CD8-positive, alpha-beta T cell (primary cell): ENCODE measurements at regions of chr20 and their contacts with region 1.

Region 1: GRCh38 chr20:35490736-35491181 is 35.4 kb downstream of the CEP250 start:
- DNase-seq: peak; percentile 19 to 87 (median 75)
- ATAC-seq: peak; percentile 98
- H3K4me3 ChIP-seq: peak overlapping the region; percentile 86 to 94
- H3K4me3 Mint-ChIP-seq: peak overlapping the region; percentile 98
- H3K27ac ChIP-seq: peak overlapping the region; percentile 91 to 95
- H3K27ac Mint-ChIP-seq: peak overlapping the region; percentile 99
- H3K4me1 ChIP-seq: peaks cover 46% of the 10 kb centered on the region
- H3K4me1 Mint-ChIP-seq: peaks cover 61% of the 10 kb centered on the region
- H3K27me3 ChIP-seq: no peaks in the 10 kb centered on the region
- H3K27me3 Mint-ChIP-seq: no peaks in the 10 kb centered on the region
- CTCF ChIP-seq: no peak

Region 2: GRCh38 chr20:35454881-35455609 is 35.7 kb before region 1 on chr20 and contains the start of gene CEP250:
- CTCF ChIA-PET with region 1: interaction called, 4 read pairs
- POLR2A ChIA-PET with region 1: interaction called, 15 read pairs
- intact Hi-C with region 1: loop called (anchors 2 kb)
- DNase-seq: peak; percentile 86 to 96 (median 95)
- ATAC-seq: peak; percentile 98
- H3K4me3 ChIP-seq: peak within 1 kb of the TSS; percentile 62 to 94
- H3K4me3 Mint-ChIP-seq: peak within 1 kb of the TSS; percentile 94
- H3K27ac ChIP-seq: peak within 1 kb of the TSS; percentile 52 to 94
- H3K27ac Mint-ChIP-seq: peak within 1 kb of the TSS; percentile 97
- H3K4me1 ChIP-seq: peaks cover 10% of the 10 kb centered on the region
- H3K4me1 Mint-ChIP-seq: peaks cover 21% of the 10 kb centered on the region
- H3K27me3 ChIP-seq: no peaks in the 10 kb centered on the region
- H3K27me3 Mint-ChIP-seq: no peaks in the 10 kb centered on the region
- CTCF ChIP-seq: no peak
- total RNA-seq, gene CEP250: 33.4 to 34.4 TPM

Region 3: GRCh38 chr20:35541783-35542588 is 51.2 kb after region 1 on chr20 and contains the start of gene ERGIC3:
- CTCF ChIA-PET with region 1: no interaction called
- POLR2A ChIA-PET with region 1: interaction called, 5 read pairs
- intact Hi-C with region 1: loop called (anchors 2 kb)
- DNase-seq: peak; percentile 93 to 98 (median 97)
- ATAC-seq: peak; percentile 97
- H3K4me3 ChIP-seq: peak within 1 kb of the TSS; percentile 81 to 94
- H3K4me3 Mint-ChIP-seq: peak within 1 kb of the TSS; percentile 89
- H3K27ac ChIP-seq: peak within 1 kb of the TSS; percentile 71 to 86
- H3K27ac Mint-ChIP-seq: peak within 1 kb of the TSS; percentile 89
- H3K4me1 ChIP-seq: peaks cover 14% of the 10 kb centered on the region
- H3K4me1 Mint-ChIP-seq: peaks cover 27% of the 10 kb centered on the region
- H3K27me3 ChIP-seq: no peaks in the 10 kb centered on the region
- H3K27me3 Mint-ChIP-seq: no peaks in the 10 kb centered on the region
- CTCF ChIP-seq: no peak
- total RNA-seq, gene ERGIC3: 149 TPM